ENCODE measurements at regions of chr7 and their contacts with region 1.

Region 1: DNA sequence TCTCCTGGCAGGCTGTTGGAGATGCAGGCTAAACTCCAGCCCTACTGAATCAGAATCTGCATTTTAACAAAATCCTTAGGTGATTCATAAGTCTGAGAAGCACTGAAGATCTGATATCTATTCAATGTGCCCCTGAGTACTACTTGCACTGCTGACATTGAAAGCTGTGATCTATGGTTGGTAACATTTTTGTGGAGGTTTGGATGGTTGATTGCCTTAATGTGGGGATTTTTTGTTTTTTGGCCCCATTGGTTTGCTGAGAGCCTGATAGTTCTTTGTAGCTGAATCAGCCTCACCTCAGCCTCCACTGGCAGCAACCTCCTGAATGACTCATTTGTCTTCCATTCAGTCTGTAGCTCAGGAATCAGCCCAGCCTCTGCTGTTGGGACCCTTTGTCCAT is 14.7 kb upstream of the LRRN3 start:
- DNase-seq: no peak
- ATAC-seq: no peak
- H3K4me3 ChIP-seq: no peak overlapping the region
- H3K27ac ChIP-seq: no peak overlapping the region
- H3K4me1 ChIP-seq: peaks cover 0 to 13% (median 0%) of the 10 kb centered on the region in 12 donors
- H3K27me3 ChIP-seq: no peaks in the 10 kb centered on the region
- CTCF ChIP-seq: no peak
- POLR2A ChIP-seq: no peak

Region 2: DNA sequence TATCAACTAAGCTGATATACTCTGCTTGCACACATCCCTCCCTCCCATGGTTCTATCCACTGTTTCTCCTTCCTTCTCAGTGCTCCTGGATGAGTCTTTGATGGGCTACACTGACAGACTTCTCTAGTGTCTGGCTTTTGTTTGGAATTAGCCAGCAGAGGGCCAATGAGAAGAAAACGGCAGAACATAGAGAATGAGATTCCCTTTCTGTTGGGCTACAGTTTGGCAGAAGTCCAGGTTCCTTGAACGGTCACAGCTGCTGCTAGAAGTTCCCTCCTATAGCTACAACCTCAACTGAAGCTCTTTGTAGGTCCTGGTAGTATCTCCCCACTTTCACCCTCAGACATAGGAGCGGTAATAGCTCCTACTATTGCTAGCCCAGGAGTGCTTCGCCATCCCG is 236.3 kb before region 1 on chr7:
- intact Hi-C with region 1: loop called in 1 of 10 experiments (anchors 10 kb)
- DNase-seq: peak in 4 of 5 donors; percentile 22 to 31 (median 24)
- ATAC-seq: peak in 2 of 4 donors; percentile 22 to 24
- H3K4me3 ChIP-seq: no peak overlapping the region
- H3K27ac ChIP-seq: no peak overlapping the region
- H3K4me1 ChIP-seq: peaks cover 0 to 5% (median 0%) of the 10 kb centered on the region in 12 donors
- H3K27me3 ChIP-seq: no peaks in the 10 kb centered on the region
- CTCF ChIP-seq: peak in 4 of 12 donors; percentile 14 to 37 (median 23)
- POLR2A ChIP-seq: no peak

Region 3: GRCh38 chr7:110988890-110989501 is 87.2 kb before region 1 on chr7:
- intact Hi-C with region 1: loop called in 1 of 10 experiments (anchors 10 kb)
- DNase-seq: no peak
- ATAC-seq: no peak
- H3K4me3 ChIP-seq: no peak overlapping the region
- H3K27ac ChIP-seq: no peak overlapping the region
- H3K4me1 ChIP-seq: peaks cover 0 to 21% (median 3%) of the 10 kb centered on the region in 12 donors
- H3K27me3 ChIP-seq: no peaks in the 10 kb centered on the region
- CTCF ChIP-seq: no peak
- POLR2A ChIP-seq: no peak